Ovary (tissue), 10 donors: ENCODE measurements at regions of chr3 and their contacts with region 1.

Region 1: DNA sequence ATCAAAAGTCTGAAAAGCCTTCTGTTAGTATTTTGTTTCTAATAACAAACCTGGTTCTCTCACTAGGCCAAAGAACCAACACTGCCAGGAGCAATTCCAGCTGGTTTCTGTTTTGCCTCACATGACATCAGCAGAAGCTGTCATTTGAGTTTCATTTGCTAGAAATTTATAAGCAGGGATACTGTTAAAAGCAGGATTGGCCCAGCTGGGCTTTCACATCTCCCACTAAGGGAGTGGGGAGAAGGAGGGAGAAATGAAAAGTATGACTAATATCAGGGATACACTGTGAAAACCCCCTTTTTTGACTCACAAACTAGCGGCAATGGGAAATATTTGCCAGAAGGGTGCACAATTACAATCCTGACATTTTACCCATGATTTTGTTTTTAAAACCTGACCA is 5.3 kb downstream of the CCDC80 start:
- DNase-seq: peak in 4 of 5 donors; percentile 58 to 72 (median 67)
- H3K4me3 ChIP-seq: peak overlapping the region; percentile 24
- H3K27ac ChIP-seq: peak overlapping the region in 1 of 2 donors; percentile 76
- H3K4me1 ChIP-seq: peaks cover 22% of the 10 kb centered on the region
- H3K27me3 ChIP-seq: no peaks in the 10 kb centered on the region
- CTCF ChIP-seq: no peak
- EP300 ChIP-seq: no peak
- POLR2A ChIP-seq: no peak

Region 2: GRCh38 chr3:112561731-112562688 is 73.7 kb before region 1 on chr3 and contains the starts of genes ATG3 and SLC35A5:
- intact Hi-C with region 1: loop called in 1 of 4 experiments (anchors 5 kb)
- DNase-seq: peak; percentile 98 to 100 (median 99)
- H3K4me3 ChIP-seq: peak within 1 kb of the TSS; percentile 72
- H3K27ac ChIP-seq: peak within 1 kb of the TSS; percentile 75 to 94
- H3K4me1 ChIP-seq: peaks cover 6% of the 10 kb centered on the region
- H3K27me3 ChIP-seq: no peaks in the 10 kb centered on the region
- CTCF ChIP-seq: no peak
- EP300 ChIP-seq: peak; percentile 79
- POLR2A ChIP-seq: peak; percentile 86
- total RNA-seq, gene ATG3: 28.4 to 52.4 (median 40.7) TPM
- total RNA-seq, gene SLC35A5: 24.9 to 41.4 (median 28.2) TPM